PC-9 (cell line): ENCODE measurements at regions of chr1 and their contacts with region 1.

Region 1: GRCh38 chr1:43285269-43285990 is at the start of gene C1orf210:
- DNase-seq: peak; percentile 91 to 97
- H3K4me3 ChIP-seq: peak within 1 kb of the TSS; percentile 71
- H3K27ac ChIP-seq: peak within 1 kb of the TSS; percentile 21
- H3K4me1 ChIP-seq: peaks cover 22% of the 10 kb centered on the region
- H3K27me3 ChIP-seq: no peaks in the 10 kb centered on the region
- CTCF ChIP-seq: peak; percentile 70
- total RNA-seq, gene C1orf210: 23.3 and 29.3 TPM in 2 replicates

Region 2: GRCh38 chr1:43165162-43165561 is 120.3 kb before region 1 on chr1:
- CTCF ChIA-PET with region 1: no interaction called
- POLR2A ChIA-PET with region 1: no interaction called
- intact Hi-C with region 1: no loop called
- DNase-seq: no peak
- H3K4me3 ChIP-seq: no peak overlapping the region
- H3K27ac ChIP-seq: no peak overlapping the region
- H3K4me1 ChIP-seq: 0 out of 2 replicates have a peak, but pooled peaks cover under 1% of the 10 kb centered on the region
- H3K27me3 ChIP-seq: no peaks in the 10 kb centered on the region
- CTCF ChIP-seq: no peak

Region 3: DNA sequence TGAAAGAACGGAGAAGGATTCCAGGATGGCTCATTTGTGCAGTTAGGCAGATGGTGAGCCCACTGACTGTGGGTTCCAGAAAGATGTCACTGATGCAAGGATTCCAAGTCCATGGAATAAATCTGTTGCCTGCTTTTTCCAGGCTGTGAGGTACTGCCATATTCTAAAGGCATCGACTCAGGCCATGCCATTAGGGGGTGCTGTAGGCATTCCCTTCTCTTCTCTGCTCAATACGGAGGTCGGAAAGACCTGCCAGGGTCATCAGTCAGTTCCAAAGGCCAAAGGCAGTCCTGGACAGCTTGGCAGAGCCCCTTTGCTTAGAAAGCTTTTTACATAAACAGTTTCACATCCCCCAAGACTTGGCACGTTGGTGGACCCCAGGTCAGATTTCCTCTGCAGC is 47.3 kb before region 1 on chr1:
- CTCF ChIA-PET with region 1: no interaction called
- POLR2A ChIA-PET with region 1: interaction called, 27 read pairs
- intact Hi-C with region 1: loop called (anchors 1 kb)
- DNase-seq: peak; percentile 47 to 73
- H3K4me3 ChIP-seq: no peak overlapping the region
- H3K27ac ChIP-seq: no peak overlapping the region
- H3K4me1 ChIP-seq: peaks cover 12% of the 10 kb centered on the region
- H3K27me3 ChIP-seq: no peaks in the 10 kb centered on the region
- CTCF ChIP-seq: peak; percentile 84

Region 4: DNA sequence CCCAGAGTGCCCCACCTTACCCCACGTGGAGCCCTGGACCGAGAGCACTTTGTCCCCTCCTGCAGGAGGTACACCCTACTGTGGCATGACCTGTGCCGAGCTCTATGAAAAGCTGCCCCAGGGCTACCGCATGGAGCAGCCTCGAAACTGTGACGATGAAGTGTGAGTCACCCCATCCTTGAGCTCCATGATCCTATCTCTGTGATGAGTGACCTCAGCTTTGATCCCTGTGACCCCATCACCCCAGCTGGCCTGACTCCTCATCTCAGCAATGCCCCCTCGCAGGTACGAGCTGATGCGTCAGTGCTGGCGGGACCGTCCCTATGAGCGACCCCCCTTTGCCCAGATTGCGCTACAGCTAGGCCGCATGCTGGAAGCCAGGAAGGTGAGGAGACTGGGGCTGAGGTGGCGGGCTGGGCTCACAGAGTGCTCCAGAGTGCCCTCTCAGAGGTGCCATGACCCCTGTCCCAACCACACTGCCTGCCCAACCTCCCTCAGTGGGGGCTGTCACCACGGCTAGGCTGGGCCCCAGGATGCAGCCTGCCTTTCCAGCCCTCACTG is 36.0 kb after region 1 on chr1:
- CTCF ChIA-PET with region 1: interaction called, 3 read pairs
- POLR2A ChIA-PET with region 1: no interaction called
- intact Hi-C with region 1: loop called (anchors 5 kb)
- DNase-seq: peak; percentile 54 to 60
- H3K4me3 ChIP-seq: no peak overlapping the region
- H3K27ac ChIP-seq: no peak overlapping the region
- H3K4me1 ChIP-seq: no peaks in the 10 kb centered on the region; the same call in 1 of the 2 replicates
- H3K27me3 ChIP-seq: no peaks in the 10 kb centered on the region
- CTCF ChIP-seq: no peak

Region 5: DNA sequence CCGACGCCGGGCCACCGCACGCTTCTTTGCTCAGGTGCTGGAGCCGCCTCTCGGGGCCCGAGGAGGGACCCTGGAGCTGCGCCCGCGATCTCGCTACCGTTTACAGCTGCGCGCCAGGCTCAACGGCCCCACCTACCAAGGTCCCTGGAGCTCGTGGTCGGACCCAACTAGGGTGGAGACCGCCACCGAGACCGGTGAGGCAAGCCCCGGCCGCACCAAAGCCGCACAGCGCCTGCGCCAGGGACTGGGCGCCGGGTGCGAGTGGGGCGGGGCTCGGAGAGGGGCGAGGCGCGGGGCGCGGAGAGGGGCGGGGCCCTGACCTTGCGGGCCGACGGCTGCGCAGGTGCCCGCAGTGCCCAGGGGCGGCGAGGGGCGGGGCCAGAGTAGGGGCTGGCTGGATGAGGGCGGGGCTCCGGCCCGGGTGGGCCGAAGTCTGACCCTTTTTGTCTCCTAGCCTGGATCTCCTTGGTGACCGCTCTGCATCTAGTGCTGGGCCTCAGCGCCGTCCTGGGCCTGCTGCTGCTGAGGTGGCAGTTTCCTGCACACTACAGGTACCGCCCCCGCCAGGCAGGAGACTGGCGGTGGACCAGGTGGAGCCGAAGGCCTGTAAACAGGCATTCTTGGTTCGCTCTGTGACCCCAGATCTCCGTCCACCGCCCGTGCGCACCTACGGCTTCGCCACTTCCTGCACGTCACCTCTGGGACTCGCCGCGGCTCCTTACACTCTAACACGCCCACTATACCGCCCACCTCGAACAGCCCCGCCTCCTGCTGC is 63.6 kb after region 1 on chr1:
- CTCF ChIA-PET with region 1: no interaction called
- POLR2A ChIA-PET with region 1: interaction called, 37 read pairs
- intact Hi-C with region 1: loop called (anchors 2 kb)
- DNase-seq: peak; percentile 85 to 99
- H3K4me3 ChIP-seq: peak overlapping the region; percentile 66
- H3K27ac ChIP-seq: peak overlapping the region; percentile 94
- H3K4me1 ChIP-seq: peaks cover 48% of the 10 kb centered on the region
- H3K27me3 ChIP-seq: no peaks in the 10 kb centered on the region
- CTCF ChIP-seq: no peak

Region 6: DNA sequence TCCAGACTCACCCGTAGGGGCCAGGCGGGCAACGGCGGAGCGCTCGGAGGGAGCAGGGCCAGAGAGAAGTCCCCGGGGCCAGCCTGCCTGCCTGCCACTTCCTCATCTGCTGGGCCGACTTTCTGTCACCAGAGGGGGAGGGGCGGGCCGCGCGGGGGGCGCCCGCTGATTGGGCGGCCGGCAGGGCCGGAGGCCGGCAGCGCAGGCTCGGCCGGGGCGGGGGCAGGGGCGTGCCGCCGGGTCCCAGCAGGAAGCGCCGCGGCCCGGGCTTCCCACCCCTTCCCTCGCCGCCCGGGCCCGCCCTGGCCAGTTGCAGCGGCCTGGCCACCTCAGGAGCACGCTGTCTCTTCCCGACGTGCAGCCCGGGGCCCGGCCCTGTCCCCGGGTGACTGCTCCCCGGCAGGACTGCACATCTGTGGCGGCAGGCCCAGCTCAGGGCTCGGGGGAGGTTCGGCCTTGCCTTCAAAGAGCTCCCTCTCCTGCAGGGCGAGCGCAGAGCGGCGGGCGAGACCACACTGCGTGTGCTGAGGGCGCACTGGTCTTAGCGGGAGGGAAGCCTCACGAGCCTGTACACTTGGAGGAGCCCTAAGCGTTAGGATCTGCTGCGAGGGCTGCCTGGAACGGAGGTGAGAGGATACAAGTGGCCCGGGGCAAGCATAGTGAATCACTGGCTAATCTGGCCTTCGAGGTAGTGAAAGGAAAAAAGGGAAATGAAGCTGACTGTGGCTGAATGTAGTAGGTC is 82.6 kb after region 1 on chr1 and contains the start of gene ELOVL1:
- CTCF ChIA-PET with region 1: interaction called, 3 read pairs
- POLR2A ChIA-PET with region 1: interaction called, 10 read pairs
- intact Hi-C with region 1: loop called (anchors 2 kb)
- DNase-seq: peak; percentile 82 to 96
- H3K4me3 ChIP-seq: peak within 1 kb of the TSS; percentile 99
- H3K27ac ChIP-seq: peak within 1 kb of the TSS; percentile 89
- H3K4me1 ChIP-seq: peaks cover 69% of the 10 kb centered on the region
- H3K27me3 ChIP-seq: no peaks in the 10 kb centered on the region
- CTCF ChIP-seq: peak; percentile 33; the same call in 1 of the 2 replicates
- total RNA-seq, gene ELOVL1: 131 TPM in 2 replicates

Region 7: DNA sequence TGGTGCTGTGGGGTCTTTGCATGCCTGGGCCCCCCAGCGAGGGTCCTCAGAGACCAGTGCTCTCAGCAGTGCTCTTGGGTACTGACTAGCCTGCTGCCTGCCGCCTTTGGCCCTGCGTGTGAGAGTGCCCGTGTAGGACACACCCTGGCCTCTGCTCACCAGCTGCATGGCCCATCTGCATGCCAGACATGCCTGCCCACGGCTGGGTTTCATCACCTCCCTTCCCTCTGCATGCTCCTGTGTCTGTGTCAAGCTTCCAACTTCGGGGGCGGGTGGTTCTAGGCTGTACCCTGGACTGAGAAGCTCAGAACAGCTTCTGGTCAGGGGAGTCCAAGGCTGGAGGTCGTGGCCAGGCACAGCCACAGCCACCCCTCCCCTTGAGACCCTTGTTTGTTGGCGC is 302.2 kb after region 1 on chr1:
- CTCF ChIA-PET with region 1: no interaction called
- POLR2A ChIA-PET with region 1: no interaction called
- intact Hi-C with region 1: no loop called
- DNase-seq: peak in 1 of 2 experiments; percentile 17
- H3K4me3 ChIP-seq: no peak overlapping the region
- H3K27ac ChIP-seq: no peak overlapping the region
- H3K4me1 ChIP-seq: peaks cover 2% of the 10 kb centered on the region
- H3K27me3 ChIP-seq: no peaks in the 10 kb centered on the region
- CTCF ChIP-seq: no peak